ENCODE measurements at regions of chr19 and their contacts with region 1.

Region 1: GRCh38 chr19:14689598-14690503 is at the start of gene ZNF333:
- DNase-seq: peak; percentile 84 to 92
- ATAC-seq: peak; percentile 98 to 99
- H3K4me3 ChIP-seq: peak within 1 kb of the TSS; percentile 73 to 91 (median 84)
- H3K27ac ChIP-seq: peak within 1 kb of the TSS; percentile 83 to 95 (median 90)
- H3K4me1 ChIP-seq: peaks cover 19% of the 10 kb centered on the region in 2 donors
- H3K27me3 ChIP-seq: no peaks in the 10 kb centered on the region
- CTCF ChIP-seq: no peak
- POLR2A ChIP-seq: peak; percentile 39 to 60
- total RNA-seq, gene ZNF333: 4.6 to 12.7 (median 10.3) TPM

Region 2: DNA sequence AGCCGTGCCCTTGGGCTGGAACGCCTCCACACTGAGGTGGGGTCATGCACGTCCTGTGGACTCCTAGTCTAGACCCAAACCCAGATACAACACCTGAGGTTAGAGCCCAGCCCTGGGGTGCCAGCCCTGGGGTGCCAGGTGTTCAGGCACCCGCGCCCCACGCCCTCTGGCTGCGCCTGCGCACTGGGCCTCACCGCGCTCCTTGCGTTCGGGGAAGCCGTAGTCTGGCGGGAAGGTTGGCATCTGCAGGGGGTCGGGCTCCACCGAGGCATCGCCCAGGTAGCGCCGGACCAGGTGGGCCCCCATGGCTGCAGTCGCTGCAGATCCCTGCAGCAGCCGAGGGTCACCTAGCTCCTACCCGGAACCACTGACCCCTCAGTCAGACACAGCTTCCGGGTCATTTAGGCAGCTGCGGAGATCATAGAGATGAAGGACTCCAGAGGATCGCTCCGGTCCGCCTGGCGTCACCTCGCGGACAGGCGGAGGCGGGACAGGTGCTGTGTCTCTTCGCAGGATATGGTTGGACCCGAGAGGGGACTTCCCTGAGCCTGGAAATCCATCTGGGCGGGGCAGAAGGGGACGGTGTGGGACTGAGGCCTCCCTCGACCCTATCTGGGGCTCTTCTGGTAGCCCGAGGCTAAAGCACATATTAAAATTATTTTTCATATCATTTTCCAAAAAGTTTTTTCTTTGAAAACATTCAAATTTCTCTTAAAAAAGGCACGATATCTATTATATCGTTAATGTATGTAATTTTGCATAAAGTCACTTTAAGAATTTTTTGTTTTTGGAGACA is 118.0 kb before region 1 on chr19 and contains the start of gene NDUFB7:
- in situ Hi-C with region 1: loop called in 2 of 4 experiments (anchors 5 to 10 kb)
- intact Hi-C with region 1: loop called (anchors 1 kb)
- DNase-seq: peak; percentile 85 to 93
- ATAC-seq: peak; percentile 99 to 100
- H3K4me3 ChIP-seq: peak within 1 kb of the TSS; percentile 89 to 100 (median 96)
- H3K27ac ChIP-seq: peak within 1 kb of the TSS; percentile 87 to 92 (median 92)
- H3K4me1 ChIP-seq: peaks cover 14 to 22% of the 10 kb centered on the region in 2 donors
- H3K27me3 ChIP-seq: no peaks in the 10 kb centered on the region
- CTCF ChIP-seq: peak; percentile 47 to 85 (median 70)
- POLR2A ChIP-seq: peak; percentile 49 to 73
- total RNA-seq, gene NDUFB7: 344 to 756 (median 532) TPM

Measured in gastrocnemius medialis (tissue), 4 donors.